WTC11 (cell line): ENCODE measurements at regions of chr2 and their contacts with region 1.

Region 1: GRCh38 chr2:201158111-201158929 is 24.6 kb upstream of the CASP10 start:
- DNase-seq: peak; percentile 51
- ATAC-seq: peak; percentile 92
- H3K4me3 Mint-ChIP-seq: no peak overlapping the region
- H3K27ac Mint-ChIP-seq: peak overlapping the region; percentile 91
- H3K4me1 Mint-ChIP-seq: peaks cover 13% of the 10 kb centered on the region
- H3K27me3 Mint-ChIP-seq: no peaks in the 10 kb centered on the region
- CTCF ChIP-seq: peak; percentile 7; the same call in 1 of the 2 replicates

Region 2: GRCh38 chr2:200834701-200835100 is 323.6 kb before region 1 on chr2:
- CTCF ChIA-PET with region 1: no interaction called
- POLR2A ChIA-PET with region 1: no interaction called
- DNase-seq: no peak
- ATAC-seq: no peak
- H3K4me3 Mint-ChIP-seq: no peak overlapping the region
- H3K27ac Mint-ChIP-seq: no peak overlapping the region
- H3K4me1 Mint-ChIP-seq: peaks cover 5% of the 10 kb centered on the region
- H3K27me3 Mint-ChIP-seq: no peaks in the 10 kb centered on the region; the same call in 1 of the 2 replicates
- CTCF ChIP-seq: no peak

Region 3: DNA sequence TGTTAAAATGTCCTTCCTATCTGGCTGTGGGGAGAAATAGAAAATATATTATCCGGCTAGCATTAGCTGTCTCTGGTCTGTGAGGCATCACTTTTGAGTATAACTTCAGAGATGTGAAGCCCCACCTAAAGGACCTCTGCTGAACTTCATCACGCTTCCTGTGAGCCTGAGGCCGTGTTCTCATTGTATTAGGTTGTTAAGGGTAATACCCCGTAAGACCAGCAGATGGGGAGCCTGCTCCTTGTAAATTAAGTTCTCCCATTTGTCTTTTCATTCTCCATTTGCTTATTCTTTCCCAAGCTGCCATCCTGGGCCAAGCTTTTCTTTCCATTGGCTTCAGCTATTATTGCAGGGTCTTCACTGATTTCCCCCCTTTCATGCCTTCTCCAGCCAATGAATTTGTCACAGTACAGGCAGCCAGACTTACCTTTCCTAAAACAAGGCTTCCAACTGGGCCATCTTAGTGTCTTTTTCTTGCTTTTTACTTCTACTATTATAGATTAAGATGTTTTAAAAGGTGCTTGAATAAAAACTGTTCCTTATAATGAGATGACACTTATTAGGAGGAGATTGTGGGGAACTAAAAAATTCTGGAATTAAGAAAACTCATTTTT is 256.8 kb before region 1 on chr2:
- CTCF ChIA-PET with region 1: interaction called, 13 read pairs
- POLR2A ChIA-PET with region 1: no interaction called
- DNase-seq: peak; percentile 61
- ATAC-seq: peak; percentile 98
- H3K4me3 Mint-ChIP-seq: no peak overlapping the region
- H3K27ac Mint-ChIP-seq: peak overlapping the region; percentile 64; the same call in 1 of the 2 replicates
- H3K4me1 Mint-ChIP-seq: no peaks in the 10 kb centered on the region
- H3K27me3 Mint-ChIP-seq: no peaks in the 10 kb centered on the region
- CTCF ChIP-seq: peak; percentile 64

Region 4: GRCh38 chr2:201071479-201072200 is 86.7 kb before region 1 on chr2 and contains the starts of genes HYCC2 and NDUFB3:
- CTCF ChIA-PET with region 1: interaction called, 18 read pairs
- POLR2A ChIA-PET with region 1: no interaction called
- DNase-seq: peak; percentile 89
- ATAC-seq: peak; percentile 98
- H3K4me3 Mint-ChIP-seq: peak within 1 kb of the TSS; percentile 95
- H3K27ac Mint-ChIP-seq: peak within 1 kb of the TSS; percentile 93
- H3K4me1 Mint-ChIP-seq: peaks cover 17% of the 10 kb centered on the region
- H3K27me3 Mint-ChIP-seq: no peaks in the 10 kb centered on the region
- CTCF ChIP-seq: no peak
- total RNA-seq, gene HYCC2: 8.8 to 10.4 TPM (median 9.1 TPM) in 3 replicates
- total RNA-seq, gene NDUFB3: 65.5 to 70.9 TPM (median 66.8 TPM) in 3 replicates

Region 5: DNA sequence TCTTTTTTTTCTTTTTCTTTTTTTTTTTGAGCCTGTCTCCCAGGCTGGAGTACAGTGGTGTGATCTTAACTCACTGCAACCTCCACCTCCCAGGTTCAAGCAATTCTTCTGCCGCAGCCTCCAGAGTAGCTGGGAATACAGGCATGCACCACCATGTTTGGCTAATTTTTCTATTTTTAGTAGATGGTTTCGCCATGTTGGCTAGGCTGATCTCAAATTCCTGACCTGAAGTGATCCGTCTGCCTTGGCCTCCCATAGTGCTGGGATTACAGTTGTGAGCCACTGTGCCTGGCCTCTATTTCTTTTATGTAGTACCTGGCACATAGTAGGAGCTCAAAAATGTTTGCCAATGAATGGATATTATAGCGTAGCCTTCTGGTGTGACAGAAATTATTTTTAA is 49.1 kb before region 1 on chr2:
- CTCF ChIA-PET with region 1: interaction called, 17 read pairs
- POLR2A ChIA-PET with region 1: no interaction called
- DNase-seq: no peak
- ATAC-seq: no peak
- H3K4me3 Mint-ChIP-seq: no peak overlapping the region
- H3K27ac Mint-ChIP-seq: no peak overlapping the region
- H3K4me1 Mint-ChIP-seq: peaks cover 5% of the 10 kb centered on the region
- H3K27me3 Mint-ChIP-seq: peaks cover 3% of the 10 kb centered on the region; the same call in 1 of the 2 replicates
- CTCF ChIP-seq: no peak

Region 6: GRCh38 chr2:201182650-201183364 is 24.5 kb after region 1 on chr2 and contains the start of gene CASP10:
- CTCF ChIA-PET with region 1: interaction called, 16 read pairs
- POLR2A ChIA-PET with region 1: interaction called, 4 read pairs
- DNase-seq: no peak
- ATAC-seq: peak; percentile 94
- H3K4me3 Mint-ChIP-seq: peak within 1 kb of the TSS; percentile 64
- H3K27ac Mint-ChIP-seq: peak within 1 kb of the TSS; percentile 90
- H3K4me1 Mint-ChIP-seq: peaks cover 15% of the 10 kb centered on the region
- H3K27me3 Mint-ChIP-seq: no peaks in the 10 kb centered on the region; the same call in none of the 2 replicates
- CTCF ChIP-seq: no peak
- total RNA-seq, gene CASP10: 2.8 to 2.9 TPM (median 2.8 TPM) in 3 replicates

Region 7: GRCh38 chr2:201257956-201258665 is 99.8 kb after region 1 on chr2:
- CTCF ChIA-PET with region 1: no interaction called
- POLR2A ChIA-PET with region 1: no interaction called
- DNase-seq: no peak
- ATAC-seq: peak; percentile 15
- H3K4me3 Mint-ChIP-seq: peak overlapping the region; percentile 56
- H3K27ac Mint-ChIP-seq: peak overlapping the region; percentile 65
- H3K4me1 Mint-ChIP-seq: peaks cover 33% of the 10 kb centered on the region
- H3K27me3 Mint-ChIP-seq: no peaks in the 10 kb centered on the region
- CTCF ChIP-seq: no peak